Left ventricle myocardium inferior (tissue), 1 donor: ENCODE measurements at regions of chr5 and their contacts with region 1.

Region 1: GRCh38 chr5:159915904-159916840 is at the start of gene ADRA1B:
- DNase-seq: peak; percentile 79
- H3K4me3 ChIP-seq: peak within 1 kb of the TSS; percentile 70
- H3K27ac ChIP-seq: peak within 1 kb of the TSS; percentile 81
- H3K4me1 ChIP-seq: peaks cover 24% of the 10 kb centered on the region
- H3K27me3 ChIP-seq: peaks cover 22% of the 10 kb centered on the region
- CTCF ChIP-seq: peak; percentile 72
- total RNA-seq, gene ADRA1B: 2.5 TPM

Region 2: GRCh38 chr5:159444441-159445082 is 471.6 kb before region 1 on chr5:
- intact Hi-C with region 1: loop called (anchors 10 kb)
- DNase-seq: no peak
- H3K4me3 ChIP-seq: no peak overlapping the region
- H3K27ac ChIP-seq: no peak overlapping the region
- H3K4me1 ChIP-seq: peaks cover 23% of the 10 kb centered on the region
- H3K27me3 ChIP-seq: no peaks in the 10 kb centered on the region
- CTCF ChIP-seq: peak; percentile 38